ENCODE measurements at regions of chr1 and their contacts with region 1.

Region 1: DNA sequence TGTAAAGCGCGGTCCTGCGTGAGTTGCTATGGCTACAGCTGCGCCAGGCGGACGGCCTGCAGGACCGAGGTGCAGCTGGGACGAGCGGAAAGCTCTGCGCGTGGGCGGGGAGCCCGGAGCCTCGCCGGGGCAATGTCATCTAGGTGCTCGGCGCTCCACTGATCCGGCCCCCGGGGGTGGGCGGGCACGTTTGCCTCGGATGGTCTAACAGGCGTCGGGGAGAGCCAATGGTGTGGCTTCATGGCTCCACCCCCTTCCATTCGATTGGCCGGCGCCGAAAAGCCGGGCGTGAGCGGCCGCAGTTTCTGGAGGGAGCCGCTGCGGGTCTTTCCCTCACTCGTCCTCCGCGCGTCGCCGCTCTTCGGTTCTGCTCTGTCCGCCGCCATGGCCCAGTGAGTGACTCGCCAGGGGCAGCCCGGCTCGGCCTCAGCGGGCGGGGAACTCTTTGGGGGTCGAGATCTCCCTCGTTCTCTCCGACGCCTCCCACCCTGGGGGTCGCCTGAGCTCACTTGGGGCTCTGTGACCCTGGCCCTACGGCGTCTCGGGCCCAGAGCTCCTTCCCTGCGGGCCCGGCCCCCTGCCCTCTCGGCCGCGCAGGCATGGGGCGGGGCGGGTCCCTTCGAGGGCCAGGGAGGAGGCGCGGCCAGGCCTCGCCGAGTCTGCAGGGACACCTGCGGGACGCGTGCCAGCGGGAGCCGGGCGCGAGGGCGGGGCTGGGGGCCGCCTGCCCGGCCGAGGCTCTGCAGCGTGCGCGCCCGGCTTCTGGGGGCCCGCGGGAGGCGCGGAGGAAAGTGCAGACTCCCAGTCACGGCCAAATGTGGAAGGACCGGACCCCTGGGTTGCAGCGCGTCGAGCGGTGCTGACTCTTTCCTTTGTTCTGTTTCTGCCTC is at the start of gene PGD:
- DNase-seq: peak; percentile 97
- ATAC-seq: peak; percentile 94
- H3K4me3 ChIP-seq: peak within 1 kb of the TSS; percentile 62 to 84 (median 76)
- H3K4me3 Mint-ChIP-seq: peak within 1 kb of the TSS; percentile 96
- H3K27ac ChIP-seq: peak within 1 kb of the TSS; percentile 78 to 84
- H3K27ac Mint-ChIP-seq: peak within 1 kb of the TSS; percentile 93
- H3K4me1 ChIP-seq: peaks cover 9 to 17% of the 10 kb centered on the region in 2 donors
- H3K4me1 Mint-ChIP-seq: peaks cover 22% of the 10 kb centered on the region
- H3K27me3 ChIP-seq: no peaks in the 10 kb centered on the region
- H3K27me3 Mint-ChIP-seq: no peaks in the 10 kb centered on the region
- CTCF ChIP-seq: no peak
- total RNA-seq, gene PGD: 56.7 and 58.3 TPM in 2 replicates

Region 2: GRCh38 chr1:10032590-10033358 is 366.2 kb before region 1 on chr1 and contains the start of gene UBE4B:
- CTCF ChIA-PET with region 1: no interaction called
- POLR2A ChIA-PET with region 1: no interaction called
- intact Hi-C with region 1: loop called (anchors 1 kb)
- DNase-seq: peak; percentile 99
- ATAC-seq: peak; percentile 94
- H3K4me3 ChIP-seq: peak within 1 kb of the TSS; percentile 70 to 93 (median 89)
- H3K4me3 Mint-ChIP-seq: peak within 1 kb of the TSS; percentile 99
- H3K27ac ChIP-seq: peak within 1 kb of the TSS; percentile 73 to 84
- H3K27ac Mint-ChIP-seq: peak within 1 kb of the TSS; percentile 96
- H3K4me1 ChIP-seq: peaks cover 18 to 19% of the 10 kb centered on the region in 2 donors
- H3K4me1 Mint-ChIP-seq: peaks cover 23% of the 10 kb centered on the region
- H3K27me3 ChIP-seq: no peaks in the 10 kb centered on the region
- H3K27me3 Mint-ChIP-seq: no peaks in the 10 kb centered on the region
- CTCF ChIP-seq: peak; percentile 89
- total RNA-seq, gene UBE4B: 57.5 and 59.0 TPM in 2 replicates

Region 3: DNA sequence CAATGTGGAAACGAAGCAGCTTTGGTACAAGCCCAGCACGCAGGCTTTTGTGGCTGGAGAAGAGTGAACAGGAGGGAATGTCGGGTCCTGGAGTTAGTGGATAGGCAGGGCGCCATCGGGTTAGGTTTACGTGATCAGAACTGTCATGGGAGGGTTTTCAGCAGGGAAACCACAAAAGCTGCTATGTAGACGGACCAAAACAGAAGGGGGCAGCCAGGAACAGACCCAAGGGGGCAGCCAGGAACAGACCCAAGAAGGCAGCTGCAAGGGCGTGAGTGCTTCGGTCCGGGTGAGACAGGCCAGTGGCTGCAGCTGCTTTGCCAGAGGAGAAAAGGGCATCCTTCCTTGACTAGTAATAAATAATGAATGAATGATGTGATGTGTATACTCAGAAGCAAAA is 266.1 kb before region 1 on chr1:
- CTCF ChIA-PET with region 1: no interaction called
- POLR2A ChIA-PET with region 1: no interaction called
- intact Hi-C with region 1: no loop called
- DNase-seq: no peak
- ATAC-seq: no peak
- H3K4me3 ChIP-seq: no peak overlapping the region
- H3K4me3 Mint-ChIP-seq: no peak overlapping the region
- H3K27ac ChIP-seq: no peak overlapping the region
- H3K27ac Mint-ChIP-seq: no peak overlapping the region
- H3K4me1 ChIP-seq: no peaks in the 10 kb centered on the region
- H3K4me1 Mint-ChIP-seq: no peaks in the 10 kb centered on the region
- H3K27me3 ChIP-seq: no peaks in the 10 kb centered on the region
- H3K27me3 Mint-ChIP-seq: no peaks in the 10 kb centered on the region
- CTCF ChIP-seq: no peak

Region 4: GRCh38 chr1:10378081-10378841 is 20.7 kb before region 1 on chr1:
- CTCF ChIA-PET with region 1: interaction called, 6 read pairs
- POLR2A ChIA-PET with region 1: interaction called, 6 read pairs
- intact Hi-C with region 1: loop called (anchors 1 kb)
- DNase-seq: no peak
- ATAC-seq: no peak
- H3K4me3 ChIP-seq: no peak overlapping the region
- H3K4me3 Mint-ChIP-seq: no peak overlapping the region
- H3K27ac ChIP-seq: no peak overlapping the region
- H3K27ac Mint-ChIP-seq: no peak overlapping the region
- H3K4me1 ChIP-seq: no peaks in the 10 kb centered on the region
- H3K4me1 Mint-ChIP-seq: no peaks in the 10 kb centered on the region
- H3K27me3 ChIP-seq: no peaks in the 10 kb centered on the region
- H3K27me3 Mint-ChIP-seq: no peaks in the 10 kb centered on the region
- CTCF ChIP-seq: no peak

Region 5: DNA sequence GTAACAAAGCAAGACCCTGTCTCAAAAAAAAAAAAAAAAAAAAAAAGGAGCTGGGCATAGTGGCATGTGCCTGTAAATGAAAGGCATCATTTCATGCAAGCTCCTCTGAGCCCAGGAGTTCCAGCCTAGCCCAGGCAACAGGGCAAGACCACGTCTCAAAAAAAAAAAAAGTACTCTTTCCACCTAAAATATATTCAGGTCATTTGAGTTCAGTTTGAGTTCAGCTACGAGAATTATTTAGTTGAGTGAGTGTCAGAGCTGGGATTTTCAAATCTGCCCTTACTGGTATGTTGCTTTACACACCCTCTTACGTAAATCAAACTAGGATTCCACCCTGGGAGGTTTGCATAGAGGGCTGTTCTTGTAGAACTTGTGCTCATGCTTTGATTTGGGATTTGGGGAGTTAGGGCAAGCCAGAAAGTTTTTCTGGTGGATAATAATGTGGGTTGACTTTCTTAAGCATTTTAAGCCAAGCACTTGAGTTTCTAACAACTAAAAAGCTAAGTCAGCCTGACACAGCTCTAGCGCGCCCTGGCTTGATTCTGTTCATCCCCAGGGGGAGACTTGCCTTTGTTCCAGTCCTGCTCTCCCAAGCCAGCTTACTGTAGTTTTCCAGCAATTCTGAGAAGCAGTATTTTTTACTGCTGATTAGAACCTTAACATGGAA is 11.4 kb before region 1 on chr1:
- CTCF ChIA-PET with region 1: interaction called, 11 read pairs
- POLR2A ChIA-PET with region 1: interaction called, 10 read pairs
- intact Hi-C with region 1: loop called (anchors 1 kb)
- DNase-seq: no peak
- ATAC-seq: no peak
- H3K4me3 ChIP-seq: peak overlapping the region in 1 of 5 experiments; percentile 21
- H3K4me3 Mint-ChIP-seq: no peak overlapping the region
- H3K27ac ChIP-seq: no peak overlapping the region
- H3K27ac Mint-ChIP-seq: no peak overlapping the region
- H3K4me1 ChIP-seq: peaks cover 9 to 13% of the 10 kb centered on the region in 2 donors
- H3K4me1 Mint-ChIP-seq: peaks cover 7% of the 10 kb centered on the region
- H3K27me3 ChIP-seq: no peaks in the 10 kb centered on the region
- H3K27me3 Mint-ChIP-seq: no peaks in the 10 kb centered on the region
- CTCF ChIP-seq: no peak

Region 6: GRCh38 chr1:10430216-10431069 is 31.5 kb after region 1 on chr1 and contains the start of gene CENPS:
- CTCF ChIA-PET with region 1: interaction called, 18 read pairs
- POLR2A ChIA-PET with region 1: interaction called, 4 read pairs
- intact Hi-C with region 1: loop called (anchors 1 kb)
- DNase-seq: peak; percentile 96
- ATAC-seq: peak; percentile 84
- H3K4me3 ChIP-seq: peak within 1 kb of the TSS; percentile 42 to 98 (median 89)
- H3K4me3 Mint-ChIP-seq: peak within 1 kb of the TSS; percentile 96
- H3K27ac ChIP-seq: peak within 1 kb of the TSS; percentile 82 to 95
- H3K27ac Mint-ChIP-seq: peak within 1 kb of the TSS; percentile 99
- H3K4me1 ChIP-seq: peaks cover 11 to 30% of the 10 kb centered on the region in 2 donors
- H3K4me1 Mint-ChIP-seq: peaks cover 30% of the 10 kb centered on the region
- H3K27me3 ChIP-seq: no peaks in the 10 kb centered on the region
- H3K27me3 Mint-ChIP-seq: no peaks in the 10 kb centered on the region
- CTCF ChIP-seq: peak; percentile 97
- total RNA-seq, gene CENPS: 7.2 and 10.9 TPM in 2 replicates

Region 7: DNA sequence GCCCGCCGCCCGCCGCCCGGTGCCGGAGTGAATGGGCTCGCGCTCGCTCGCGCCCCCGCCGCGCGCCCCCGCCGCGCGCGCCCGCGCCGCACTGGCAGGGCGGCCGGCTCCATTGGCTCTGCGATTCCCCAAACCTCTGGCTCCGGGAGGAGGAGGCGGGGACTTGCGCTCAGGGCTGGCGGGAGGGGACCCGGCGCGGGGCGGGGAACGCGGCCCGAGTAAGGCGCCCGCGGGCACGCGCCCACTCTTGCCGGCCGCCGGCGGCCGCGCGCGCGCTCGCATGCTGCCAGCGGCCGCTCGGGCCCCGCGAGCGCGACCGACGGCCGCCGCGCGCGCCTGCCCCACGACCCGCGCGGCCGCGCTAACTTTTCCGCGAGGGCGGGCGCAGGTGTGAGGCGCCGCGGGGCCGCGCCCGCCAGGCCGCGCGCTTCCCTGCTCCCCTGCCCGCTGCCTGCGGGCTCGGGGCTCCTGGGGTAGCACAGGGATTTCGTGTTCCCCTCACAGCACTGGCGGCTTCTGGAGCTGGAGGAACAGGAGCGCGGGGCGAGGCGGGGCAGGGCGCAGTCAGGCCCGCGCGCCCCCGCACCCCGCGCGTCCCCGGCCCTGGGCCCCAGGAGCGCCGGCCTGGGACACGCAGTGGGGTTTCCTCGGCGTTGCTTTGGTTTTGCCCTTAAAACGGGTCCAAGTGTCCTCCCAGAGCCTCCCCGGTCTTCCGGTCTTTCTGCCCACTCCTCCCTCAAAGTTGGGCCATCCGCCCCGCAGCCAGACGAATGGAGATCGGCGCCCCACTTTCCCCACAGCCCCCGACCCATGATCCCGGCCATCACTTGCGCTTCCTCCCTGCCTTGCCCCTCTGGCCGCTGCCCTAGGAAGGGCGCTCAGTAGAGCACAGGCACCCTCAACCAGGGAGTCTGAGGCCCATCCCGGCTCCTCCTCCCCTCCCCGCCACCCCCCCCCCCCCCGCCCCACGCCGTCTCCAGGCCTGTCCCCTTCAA is 296.0 kb after region 1 on chr1:
- CTCF ChIA-PET with region 1: no interaction called
- POLR2A ChIA-PET with region 1: no interaction called
- intact Hi-C with region 1: loop called (anchors 10 kb)
- DNase-seq: peak; percentile 92
- ATAC-seq: peak; percentile 73
- H3K4me3 ChIP-seq: peak overlapping the region in 4 of 5 experiments; percentile 24 to 63 (median 50)
- H3K4me3 Mint-ChIP-seq: peak overlapping the region; percentile 87
- H3K27ac ChIP-seq: peak overlapping the region in 1 of 2 donors; percentile 68
- H3K27ac Mint-ChIP-seq: peak overlapping the region; percentile 85
- H3K4me1 ChIP-seq: peaks cover 16 to 24% of the 10 kb centered on the region in 2 donors
- H3K4me1 Mint-ChIP-seq: peaks cover 19% of the 10 kb centered on the region
- H3K27me3 ChIP-seq: no peaks in the 10 kb centered on the region
- H3K27me3 Mint-ChIP-seq: peaks cover 8% of the 10 kb centered on the region
- CTCF ChIP-seq: no peak